ENCODE measurements at regions of chr10 and their contacts with region 1.

Region 1: DNA sequence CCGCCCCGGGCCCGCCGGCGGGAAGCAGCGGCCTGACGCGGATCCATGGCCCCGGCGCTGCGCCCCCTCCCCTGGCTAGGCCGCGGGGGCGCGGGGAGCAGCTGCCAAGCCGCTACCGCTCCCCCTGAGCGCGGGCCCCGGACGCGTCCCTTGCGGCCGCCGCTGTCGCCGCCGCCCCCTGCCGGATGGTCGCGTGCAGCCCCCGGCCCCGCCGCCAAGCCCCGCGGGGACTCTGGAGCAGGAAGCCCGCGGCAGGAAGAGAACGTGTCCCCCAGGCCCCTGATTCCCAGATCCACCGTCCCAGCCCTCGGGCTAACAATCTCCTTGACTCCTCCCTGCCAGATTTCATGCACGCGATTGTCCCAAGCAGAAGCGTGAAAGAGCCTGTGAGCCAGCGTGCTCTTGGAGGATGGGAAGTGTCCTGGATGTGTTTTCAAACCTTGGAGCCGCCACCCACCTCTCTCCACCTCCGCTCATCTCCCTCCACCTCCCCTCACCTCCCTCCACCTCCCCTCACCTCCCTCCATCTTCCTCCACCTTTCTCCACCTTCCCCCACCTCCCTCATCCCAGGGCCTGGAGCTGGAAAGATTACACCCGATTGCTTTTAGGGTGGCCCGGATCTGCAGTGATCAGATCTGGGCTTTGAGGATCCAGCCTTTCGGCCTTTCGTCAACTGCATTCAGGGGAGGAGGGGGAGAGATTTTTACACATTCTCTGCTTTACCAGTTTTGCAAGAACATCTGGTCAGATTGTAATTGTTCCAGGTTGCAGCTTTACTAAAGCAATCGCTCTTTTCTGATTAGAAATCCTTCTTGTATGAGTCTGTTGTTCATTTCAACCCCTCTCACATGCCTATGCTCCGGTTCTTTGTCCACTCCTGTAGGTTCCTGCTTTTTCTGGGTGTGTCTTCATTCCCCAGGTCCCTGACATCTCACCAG is 570 bp upstream of the PRTFDC1 start:
- DNase-seq: no peak
- H3K4me3 ChIP-seq: peak overlapping the region; percentile 29 to 73 (median 54)
- H3K27ac ChIP-seq: peak overlapping the region; percentile 95
- H3K4me1 ChIP-seq: peaks cover 9 to 24% (median 16%) of the 10 kb centered on the region in 4 experiments; a peak in 6 of 7 replicates
- H3K27me3 ChIP-seq: no peaks in the 10 kb centered on the region
- CTCF ChIP-seq: peak; percentile 30 to 46 (median 37); a peak in 3 of 4 replicates
- EP300 ChIP-seq: no peak
- POLR2A ChIP-seq: peak; percentile 39 to 81
- RAD21 ChIP-seq: peak; percentile 7 to 45; a peak in 2 of 4 replicates

Region 2: GRCh38 chr10:24331457-24331856 is 621.5 kb before region 1 on chr10:
- CTCF ChIA-PET with region 1: no interaction called
- POLR2A ChIA-PET with region 1: no interaction called
- DNase-seq: peak in 1 of 2 experiments; percentile 2
- H3K4me3 ChIP-seq: no peak overlapping the region
- H3K27ac ChIP-seq: no peak overlapping the region
- H3K4me1 ChIP-seq: no peaks in the 10 kb centered on the region
- H3K27me3 ChIP-seq: no peaks in the 10 kb centered on the region
- CTCF ChIP-seq: no peak
- EP300 ChIP-seq: no peak
- POLR2A ChIP-seq: no peak
- RAD21 ChIP-seq: no peak

Region 3: GRCh38 chr10:24724381-24725228 is 228.4 kb before region 1 on chr10:
- CTCF ChIA-PET with region 1: interaction called, 3 read pairs
- POLR2A ChIA-PET with region 1: interaction called, 21 read pairs
- DNase-seq: peak; percentile 83 to 97
- H3K4me3 ChIP-seq: peak overlapping the region; percentile 67 to 96 (median 72)
- H3K27ac ChIP-seq: no peak overlapping the region
- H3K4me1 ChIP-seq: peaks cover 4 to 14% (median 9%) of the 10 kb centered on the region in 4 experiments
- H3K27me3 ChIP-seq: peaks cover 0 to 16% (median 12%) of the 10 kb centered on the region in 4 experiments; a peak in 5 of 7 replicates
- CTCF ChIP-seq: no peak
- EP300 ChIP-seq: no peak
- POLR2A ChIP-seq: no peak
- RAD21 ChIP-seq: no peak

Region 4: GRCh38 chr10:24756283-24756682 is 196.7 kb before region 1 on chr10:
- CTCF ChIA-PET with region 1: no interaction called
- POLR2A ChIA-PET with region 1: no interaction called
- DNase-seq: peak in 1 of 2 experiments; percentile 8
- H3K4me3 ChIP-seq: no peak overlapping the region
- H3K27ac ChIP-seq: no peak overlapping the region
- H3K4me1 ChIP-seq: no peaks in the 10 kb centered on the region
- H3K27me3 ChIP-seq: no peaks in the 10 kb centered on the region
- CTCF ChIP-seq: no peak
- EP300 ChIP-seq: no peak
- POLR2A ChIP-seq: no peak
- RAD21 ChIP-seq: no peak

Region 5: GRCh38 chr10:24929056-24929544 is 23.9 kb before region 1 on chr10:
- CTCF ChIA-PET with region 1: no interaction called
- POLR2A ChIA-PET with region 1: interaction called, 17 read pairs
- DNase-seq: no peak
- H3K4me3 ChIP-seq: no peak overlapping the region
- H3K27ac ChIP-seq: no peak overlapping the region
- H3K4me1 ChIP-seq: no peaks in the 10 kb centered on the region
- H3K27me3 ChIP-seq: no peaks in the 10 kb centered on the region
- CTCF ChIP-seq: no peak
- EP300 ChIP-seq: no peak
- POLR2A ChIP-seq: no peak
- RAD21 ChIP-seq: no peak

Region 6: DNA sequence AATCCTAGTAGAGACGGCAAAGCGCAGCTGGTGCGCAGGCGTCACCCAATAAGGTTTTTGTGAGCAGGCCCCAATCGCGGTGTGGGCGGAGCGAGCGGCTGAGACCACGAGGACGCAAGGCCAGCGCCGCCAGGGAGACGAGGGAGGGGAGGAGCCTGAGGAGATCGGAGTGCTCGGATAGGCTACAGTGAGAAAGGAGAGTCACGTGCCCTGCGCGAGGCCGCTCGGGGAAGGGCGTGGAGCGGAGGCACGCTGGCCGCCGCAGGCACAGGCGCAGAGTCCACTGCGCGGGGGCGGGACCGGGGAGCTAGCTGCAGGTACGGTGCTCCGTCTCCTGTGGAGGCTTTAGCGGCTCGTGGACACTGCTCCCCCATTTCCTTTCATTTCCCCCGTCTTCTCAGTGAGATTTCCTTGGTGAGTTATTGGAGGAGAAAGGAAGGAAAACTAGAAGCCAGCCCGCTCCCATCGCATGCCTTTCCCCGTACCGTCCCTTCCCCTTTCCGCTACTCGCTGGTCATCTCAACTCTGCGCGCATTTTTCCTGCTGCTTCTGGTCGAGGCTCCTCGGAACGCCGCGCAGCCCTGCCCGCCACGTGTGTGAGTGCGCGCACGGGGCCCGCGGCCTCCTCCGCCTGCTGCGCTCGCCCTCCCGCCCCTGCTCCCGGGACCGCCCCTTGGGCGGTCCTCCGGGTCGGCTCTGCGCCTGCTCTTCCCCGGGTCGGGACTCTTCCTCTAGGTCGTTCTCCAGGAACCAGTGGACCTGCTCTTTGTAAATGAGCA is 63.6 kb after region 1 on chr10 and contains the start of gene THNSL1:
- CTCF ChIA-PET with region 1: no interaction called
- POLR2A ChIA-PET with region 1: interaction called, 11 read pairs
- DNase-seq: peak; percentile 90 to 94
- H3K4me3 ChIP-seq: peak within 1 kb of the TSS; percentile 56 to 72 (median 68)
- H3K27ac ChIP-seq: peak within 1 kb of the TSS; percentile 76
- H3K4me1 ChIP-seq: peaks cover 0 to 3% (median 0%) of the 10 kb centered on the region in 4 experiments; a peak in 2 of 7 replicates
- H3K27me3 ChIP-seq: no peaks in the 10 kb centered on the region
- CTCF ChIP-seq: no peak
- EP300 ChIP-seq: no peak
- POLR2A ChIP-seq: peak; percentile 83 to 99
- RAD21 ChIP-seq: no peak
- total RNA-seq, gene THNSL1: 3.1 and 3.6 TPM in 2 replicates

Region 7: GRCh38 chr10:25097669-25098411 is 144.9 kb after region 1 on chr10:
- CTCF ChIA-PET with region 1: no interaction called
- POLR2A ChIA-PET with region 1: no interaction called
- DNase-seq: no peak
- H3K4me3 ChIP-seq: no peak overlapping the region
- H3K27ac ChIP-seq: no peak overlapping the region
- H3K4me1 ChIP-seq: peaks cover 0 to 3% (median 1%) of the 10 kb centered on the region in 4 experiments; a peak in 2 of 7 replicates
- H3K27me3 ChIP-seq: 0 out of 7 replicates have a peak, but pooled peaks cover 0 to 2% (median 0%) of the 10 kb centered on the region in 4 experiments
- CTCF ChIP-seq: no peak
- EP300 ChIP-seq: no peak
- POLR2A ChIP-seq: no peak
- RAD21 ChIP-seq: peak; percentile 26 to 28